CD14-positive monocyte (primary cell): ENCODE measurements at regions of chr4 and their contacts with region 1.

Region 1: DNA sequence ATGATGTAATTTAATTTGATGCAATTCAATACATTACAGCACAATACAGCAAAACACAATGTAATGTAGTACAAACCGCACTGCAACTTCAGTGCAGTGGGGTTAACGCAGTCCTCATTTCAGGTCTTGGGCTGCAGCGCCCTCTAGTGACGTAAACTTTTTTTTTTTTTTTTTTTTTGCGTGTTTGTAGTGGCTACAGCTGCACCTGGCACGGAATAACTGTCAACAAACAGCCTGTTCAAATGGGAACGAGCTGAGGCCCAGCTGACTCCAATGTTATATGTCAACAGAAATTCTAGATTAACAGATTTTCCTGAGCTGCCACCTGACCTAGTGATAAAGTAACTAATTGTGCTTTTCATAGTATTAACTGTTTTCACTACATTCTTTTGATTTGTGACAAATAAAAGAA is 33.5 kb upstream of the RASSF6 start:
- DNase-seq: peak; percentile 29 to 53 (median 34)
- H3K4me3 ChIP-seq: no peak overlapping the region
- H3K4me3 Mint-ChIP-seq: no peak overlapping the region
- H3K27ac ChIP-seq: no peak overlapping the region
- H3K27ac Mint-ChIP-seq: no peak overlapping the region
- H3K4me1 ChIP-seq: no peaks in the 10 kb centered on the region
- H3K4me1 Mint-ChIP-seq: peaks cover 1% of the 10 kb centered on the region
- H3K27me3 ChIP-seq: no peaks in the 10 kb centered on the region
- H3K27me3 Mint-ChIP-seq: peaks cover 0 to 3% (median 3%) of the 10 kb centered on the region in 3 donors
- CTCF ChIP-seq: peak; percentile 89

Region 2: GRCh38 chr4:73311428-73311827 is 342.3 kb before region 1 on chr4:
- intact Hi-C with region 1: loop called in 1 of 2 experiments (anchors 10 kb)
- DNase-seq: no peak
- H3K4me3 ChIP-seq: no peak overlapping the region
- H3K4me3 Mint-ChIP-seq: no peak overlapping the region
- H3K27ac ChIP-seq: no peak overlapping the region
- H3K27ac Mint-ChIP-seq: no peak overlapping the region
- H3K4me1 ChIP-seq: no peaks in the 10 kb centered on the region
- H3K4me1 Mint-ChIP-seq: peaks cover 4% of the 10 kb centered on the region
- H3K27me3 ChIP-seq: no peaks in the 10 kb centered on the region
- H3K27me3 Mint-ChIP-seq: peaks cover 0 to 2% (median 0%) of the 10 kb centered on the region in 3 donors
- CTCF ChIP-seq: peak; percentile 60

Region 3: DNA sequence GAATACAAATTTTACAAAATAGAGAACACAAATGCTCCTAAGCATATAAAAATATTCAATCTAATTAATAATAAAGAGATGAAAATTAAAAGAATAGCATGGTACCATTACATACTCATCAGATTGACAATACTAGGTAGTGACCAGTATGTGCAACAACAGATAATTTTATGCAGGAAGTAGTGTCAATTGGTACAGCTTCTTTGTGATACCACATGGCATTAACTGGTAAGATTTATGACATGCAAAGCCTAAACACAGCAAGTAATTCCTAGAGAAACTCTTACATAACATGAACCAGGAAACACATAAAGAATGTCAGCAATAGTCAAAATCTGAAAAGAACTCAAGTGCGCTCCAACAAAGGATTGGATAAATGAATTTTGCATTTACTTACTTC is 419.0 kb after region 1 on chr4:
- intact Hi-C with region 1: no loop called
- DNase-seq: no peak
- H3K4me3 ChIP-seq: no peak overlapping the region
- H3K4me3 Mint-ChIP-seq: no peak overlapping the region
- H3K27ac ChIP-seq: no peak overlapping the region
- H3K27ac Mint-ChIP-seq: no peak overlapping the region
- H3K4me1 ChIP-seq: no peaks in the 10 kb centered on the region
- H3K4me1 Mint-ChIP-seq: peaks cover 4% of the 10 kb centered on the region
- H3K27me3 ChIP-seq: no peaks in the 10 kb centered on the region
- H3K27me3 Mint-ChIP-seq: no peaks in the 10 kb centered on the region
- CTCF ChIP-seq: no peak

Region 4: DNA sequence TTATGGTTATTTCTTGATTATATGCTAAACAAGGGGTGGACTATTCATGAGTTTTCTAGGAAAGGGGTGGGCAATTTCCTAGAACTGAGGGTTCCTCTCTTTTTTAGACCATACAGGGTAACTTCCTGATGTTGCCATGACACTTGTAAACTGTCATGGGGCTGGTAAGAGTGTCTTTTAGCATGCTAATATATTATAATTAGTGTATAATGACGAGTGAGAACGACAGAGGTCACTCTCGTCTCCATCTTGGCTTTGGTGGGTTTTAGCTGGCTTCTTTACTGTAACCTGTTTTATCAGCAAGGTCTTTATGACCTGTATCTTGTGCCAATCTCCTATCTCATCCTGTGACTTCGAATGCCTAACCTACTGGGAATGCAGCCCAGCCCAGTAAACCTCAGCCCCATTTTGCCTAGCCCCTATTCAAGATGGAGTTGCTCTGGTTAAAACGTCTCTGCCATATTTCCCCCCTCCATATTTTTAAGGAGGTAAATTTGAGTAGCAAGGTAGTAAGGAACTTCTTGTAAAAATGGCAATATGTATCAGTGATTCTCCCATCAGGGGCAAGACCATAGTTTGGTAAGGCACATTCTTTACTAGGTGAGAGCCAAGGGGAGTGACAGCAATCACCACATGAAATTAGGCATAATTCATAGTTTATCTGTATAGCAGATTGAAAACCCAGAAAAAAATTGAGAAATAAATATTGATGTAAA is 442.7 kb after region 1 on chr4:
- intact Hi-C with region 1: no loop called
- DNase-seq: peak in 1 of 3 donors; percentile 52
- H3K4me3 ChIP-seq: no peak overlapping the region
- H3K4me3 Mint-ChIP-seq: no peak overlapping the region
- H3K27ac ChIP-seq: no peak overlapping the region
- H3K27ac Mint-ChIP-seq: peak overlapping the region in 1 of 7 donors; percentile 21
- H3K4me1 ChIP-seq: peaks cover 30 to 38% of the 10 kb centered on the region in 2 donors
- H3K4me1 Mint-ChIP-seq: peaks cover 37% of the 10 kb centered on the region
- H3K27me3 ChIP-seq: no peaks in the 10 kb centered on the region
- H3K27me3 Mint-ChIP-seq: peaks cover 0 to 9% (median 2%) of the 10 kb centered on the region in 3 donors
- CTCF ChIP-seq: no peak

Region 5: GRCh38 chr4:74133786-74134499 is 480.2 kb after region 1 on chr4:
- intact Hi-C with region 1: loop called (anchors 5 to 10 kb)
- DNase-seq: peak; percentile 64 to 81 (median 77)
- H3K4me3 ChIP-seq: no peak overlapping the region
- H3K4me3 Mint-ChIP-seq: no peak overlapping the region
- H3K27ac ChIP-seq: no peak overlapping the region
- H3K27ac Mint-ChIP-seq: no peak overlapping the region
- H3K4me1 ChIP-seq: no peaks in the 10 kb centered on the region
- H3K4me1 Mint-ChIP-seq: peaks cover 3% of the 10 kb centered on the region
- H3K27me3 ChIP-seq: no peaks in the 10 kb centered on the region
- H3K27me3 Mint-ChIP-seq: peaks cover 0 to 1% (median 0%) of the 10 kb centered on the region in 3 donors
- CTCF ChIP-seq: peak; percentile 82